Mammary epithelial cell (primary cell): ENCODE measurements at regions of chr18 and their contacts with region 1.

Region 1: GRCh38 chr18:36661999-36662398 is 166.8 kb downstream of the TPGS2 start:
- DNase-seq: no peak
- H3K4me3 ChIP-seq: no peak overlapping the region
- H3K27ac ChIP-seq: no peak overlapping the region
- H3K4me1 ChIP-seq: peaks cover 10% of the 10 kb centered on the region
- H3K27me3 ChIP-seq: no peaks in the 10 kb centered on the region
- CTCF ChIP-seq: peak in 1 of 2 donors; percentile 39

Region 2: DNA sequence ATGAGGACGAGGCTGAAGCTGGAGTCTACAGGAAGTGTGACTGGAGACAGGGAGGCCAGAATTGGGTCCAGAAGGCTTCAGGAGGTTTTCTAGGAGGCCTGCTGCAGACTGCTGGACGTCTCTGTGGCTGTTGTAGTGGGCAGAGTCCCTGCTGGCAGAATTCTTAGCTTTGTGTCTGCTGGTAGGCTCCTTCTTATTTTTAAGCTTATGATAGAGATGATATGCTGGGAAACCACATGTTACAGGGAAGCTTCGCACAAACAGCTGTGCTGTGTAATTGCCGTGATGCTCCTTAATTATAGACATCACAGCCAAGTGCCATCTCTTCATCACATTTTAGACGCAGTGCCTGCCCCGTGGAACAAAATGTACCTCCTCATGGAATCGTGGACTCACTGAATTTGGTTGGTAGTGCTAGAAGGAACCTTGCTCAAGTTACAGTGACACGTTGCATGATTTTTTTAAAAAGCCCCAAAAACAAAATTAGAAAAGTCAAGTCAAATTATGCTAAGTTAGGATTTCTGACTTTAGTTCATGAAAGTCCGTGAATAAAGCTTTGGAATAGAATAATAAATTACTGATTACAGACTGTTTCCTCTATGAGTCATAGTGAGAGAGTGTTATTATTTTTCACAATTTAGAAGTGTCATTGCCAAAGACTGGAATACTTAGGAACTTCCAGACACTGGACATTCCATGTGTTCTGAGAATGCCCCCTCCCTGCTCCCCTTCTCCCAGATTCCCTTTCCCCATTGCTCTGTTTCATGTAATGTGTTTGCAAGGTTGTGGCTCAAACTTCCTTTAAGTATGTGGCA is 220.4 kb before region 1 on chr18:
- CTCF ChIA-PET with region 1: no interaction called
- dilution Hi-C with region 1: no loop called
- in situ Hi-C with region 1: no loop called
- intact Hi-C with region 1: loop called (anchors 10 kb)
- DNase-seq: peak; percentile 67
- H3K4me3 ChIP-seq: no peak overlapping the region
- H3K27ac ChIP-seq: peak overlapping the region; percentile 18
- H3K4me1 ChIP-seq: peaks cover 52% of the 10 kb centered on the region
- H3K27me3 ChIP-seq: no peaks in the 10 kb centered on the region
- CTCF ChIP-seq: no peak

Region 3: GRCh38 chr18:36680042-36680441 is 18.0 kb after region 1 on chr18:
- CTCF ChIA-PET with region 1: interaction called, 10 read pairs
- dilution Hi-C with region 1: no loop called
- in situ Hi-C with region 1: no loop called
- intact Hi-C with region 1: no loop called
- DNase-seq: peak; percentile 44
- H3K4me3 ChIP-seq: no peak overlapping the region
- H3K27ac ChIP-seq: no peak overlapping the region
- H3K4me1 ChIP-seq: peaks cover 2% of the 10 kb centered on the region
- H3K27me3 ChIP-seq: no peaks in the 10 kb centered on the region
- CTCF ChIP-seq: no peak

Region 4: DNA sequence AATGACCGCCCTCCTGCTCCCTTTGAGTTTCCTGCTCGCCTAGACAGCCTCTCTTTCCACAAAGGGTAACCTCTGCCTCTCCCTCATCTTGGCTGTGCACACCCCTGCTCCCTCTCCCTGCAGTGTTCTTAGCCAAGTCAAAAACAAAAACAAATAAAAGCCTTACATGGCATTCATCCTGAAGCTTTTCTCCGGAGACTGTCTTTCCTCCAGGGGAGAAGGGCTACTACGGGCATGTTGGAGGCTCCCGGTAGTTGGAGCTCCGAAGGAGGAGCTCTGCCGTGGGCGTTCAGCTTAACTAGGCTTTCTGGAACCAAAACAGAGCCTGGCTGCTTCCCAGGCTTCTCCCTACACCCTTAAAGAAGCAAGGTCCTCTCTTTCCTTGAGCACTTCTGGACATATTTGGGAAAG is 62.6 kb after region 1 on chr18:
- CTCF ChIA-PET with region 1: no interaction called
- dilution Hi-C with region 1: no loop called
- in situ Hi-C with region 1: no loop called
- intact Hi-C with region 1: no loop called
- DNase-seq: no peak
- H3K4me3 ChIP-seq: no peak overlapping the region
- H3K27ac ChIP-seq: no peak overlapping the region
- H3K4me1 ChIP-seq: peaks cover 6% of the 10 kb centered on the region
- H3K27me3 ChIP-seq: no peaks in the 10 kb centered on the region
- CTCF ChIP-seq: no peak